Calu3 (cell line): ENCODE measurements at regions of chr18 and their contacts with region 1.

Region 1: DNA sequence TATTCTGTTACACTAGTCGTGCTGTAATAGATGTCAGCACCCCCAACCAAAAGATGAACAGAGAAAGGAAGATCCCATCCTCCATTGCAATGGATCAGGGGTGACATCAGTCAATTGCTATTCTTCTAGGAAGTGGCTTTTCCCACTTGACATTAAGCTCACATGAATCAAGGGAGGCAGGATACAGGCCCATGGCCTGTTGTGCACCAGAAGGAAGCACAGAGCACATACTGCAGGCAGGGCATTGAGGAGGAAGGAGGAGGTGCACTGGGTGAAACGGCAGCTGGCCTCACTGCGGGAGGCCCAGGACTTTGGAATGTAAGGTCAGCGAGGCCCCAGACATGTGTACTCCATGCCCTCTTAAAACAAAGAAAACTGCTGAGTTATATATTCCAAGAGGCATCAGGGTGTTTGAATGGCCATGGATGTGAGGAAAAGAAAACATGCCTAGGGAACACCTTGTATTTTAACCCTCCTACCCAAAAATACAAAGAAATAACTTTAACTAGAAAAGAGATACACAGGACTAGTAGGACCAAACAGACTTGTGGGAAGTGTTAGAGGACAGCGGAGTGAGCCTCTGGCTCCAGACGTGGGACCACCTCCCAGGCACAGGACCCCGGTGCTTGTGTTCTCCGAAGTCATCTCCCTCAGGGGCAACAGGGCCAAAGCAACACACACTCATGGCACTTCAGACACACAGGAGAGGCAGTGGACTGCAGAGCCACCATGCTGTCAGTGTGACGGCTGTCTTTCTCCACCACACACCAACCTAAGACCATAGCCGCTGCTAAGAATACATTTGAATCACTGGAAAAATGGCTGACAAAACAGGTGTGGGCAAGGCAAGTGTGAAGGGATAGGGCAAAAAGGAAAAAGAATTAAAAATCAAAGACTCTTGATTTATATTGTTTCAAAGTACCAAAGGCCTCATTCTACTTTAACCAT is 51.4 kb upstream of the RIOK3 start:
- DNase-seq: peak; percentile 38
- H3K4me3 Mint-ChIP-seq: no peak overlapping the region
- H3K27ac Mint-ChIP-seq: peak overlapping the region; percentile 52
- H3K4me1 Mint-ChIP-seq: peaks cover 32% of the 10 kb centered on the region
- H3K27me3 Mint-ChIP-seq: no peaks in the 10 kb centered on the region
- CTCF ChIP-seq: no peak

Region 2: GRCh38 chr18:22813648-22814328 is 587.9 kb before region 1 on chr18:
- CTCF ChIA-PET with region 1: no interaction called
- intact Hi-C with region 1: loop called (anchors 10 kb)
- DNase-seq: peak; percentile 41
- H3K4me3 Mint-ChIP-seq: no peak overlapping the region
- H3K27ac Mint-ChIP-seq: no peak overlapping the region
- H3K4me1 Mint-ChIP-seq: peaks cover 7% of the 10 kb centered on the region
- H3K27me3 Mint-ChIP-seq: peaks cover 13% of the 10 kb centered on the region
- CTCF ChIP-seq: peak; percentile 52

Region 3: GRCh38 chr18:23077493-23078256 is 324.0 kb before region 1 on chr18:
- CTCF ChIA-PET with region 1: no interaction called
- intact Hi-C with region 1: loop called (anchors 2 kb)
- DNase-seq: peak; percentile 61
- H3K4me3 Mint-ChIP-seq: no peak overlapping the region
- H3K27ac Mint-ChIP-seq: no peak overlapping the region
- H3K4me1 Mint-ChIP-seq: peaks cover 16% of the 10 kb centered on the region
- H3K27me3 Mint-ChIP-seq: no peaks in the 10 kb centered on the region
- CTCF ChIP-seq: peak; percentile 58

Region 4: DNA sequence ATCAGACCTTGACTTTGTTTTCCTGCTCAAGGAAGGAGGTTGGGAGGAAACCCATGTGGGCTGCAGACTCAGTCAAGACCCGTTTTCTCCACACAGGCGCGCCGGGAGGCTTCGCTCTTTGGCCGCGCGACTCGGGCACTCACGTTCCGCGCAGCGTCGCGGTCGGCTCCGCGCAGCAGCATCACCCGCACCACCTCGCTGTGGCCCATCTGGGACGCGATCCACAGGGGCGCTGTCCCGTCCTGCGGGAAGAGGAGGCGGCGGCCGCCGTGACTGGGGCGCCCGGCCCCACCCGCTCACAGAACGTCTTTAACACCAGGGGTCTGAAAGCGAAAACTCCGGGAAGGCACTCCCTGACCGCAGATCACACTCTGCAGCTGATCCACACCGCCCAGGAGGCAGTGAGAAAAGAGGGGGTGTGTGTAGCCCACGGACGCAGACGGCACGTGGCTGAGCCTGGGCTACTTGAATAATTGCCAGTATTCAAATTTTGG is 217.8 kb after region 1 on chr18:
- CTCF ChIA-PET with region 1: no interaction called
- intact Hi-C with region 1: no loop called
- DNase-seq: no peak
- H3K4me3 Mint-ChIP-seq: peak overlapping the region; percentile 61
- H3K27ac Mint-ChIP-seq: peak overlapping the region; percentile 2
- H3K4me1 Mint-ChIP-seq: peaks cover 49% of the 10 kb centered on the region
- H3K27me3 Mint-ChIP-seq: no peaks in the 10 kb centered on the region
- CTCF ChIP-seq: no peak